ENCODE measurements at regions of chr2 and their contacts with region 1.

Region 1: DNA sequence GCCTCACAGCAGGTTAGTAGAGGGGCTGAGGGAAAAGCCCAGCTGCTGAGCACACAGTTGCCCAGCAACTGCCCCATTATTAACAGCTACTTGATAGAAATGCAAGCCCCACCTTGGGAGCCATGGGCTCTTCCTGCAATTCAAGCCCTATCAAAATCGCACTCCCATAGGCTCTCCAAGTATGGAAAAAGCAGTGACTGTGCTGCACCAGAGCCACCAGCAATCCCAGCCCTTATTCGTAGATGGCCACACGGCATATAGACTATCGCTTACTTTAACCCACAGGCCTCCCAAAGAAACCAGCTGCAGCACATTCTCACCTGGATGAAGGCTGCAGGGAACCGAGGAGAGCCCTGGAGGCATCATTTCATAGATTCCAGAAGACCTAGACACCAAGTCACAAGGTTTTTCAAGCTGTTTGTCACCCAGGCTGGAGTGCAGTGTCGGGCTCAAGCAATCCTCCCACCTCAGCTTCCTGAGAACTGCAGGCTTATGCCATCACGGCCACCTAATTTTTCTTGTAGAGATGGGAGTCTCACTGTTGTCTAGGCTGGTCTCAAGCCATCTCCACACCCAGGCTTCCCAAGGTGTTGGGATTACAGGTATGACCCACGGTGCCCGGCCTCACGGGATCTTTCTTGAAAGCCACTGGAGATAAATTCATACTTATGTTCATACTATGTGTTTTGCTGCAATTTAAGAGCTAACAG is 11.3 kb downstream of the NCL start:
- DNase-seq: peak; percentile 35 to 54
- H3K4me3 ChIP-seq: no peak overlapping the region
- H3K4me3 Mint-ChIP-seq: no peak overlapping the region
- H3K27ac Mint-ChIP-seq: peak overlapping the region; percentile 66
- H3K4me1 ChIP-seq: no peaks in the 10 kb centered on the region
- H3K4me1 Mint-ChIP-seq: peaks cover 6% of the 10 kb centered on the region
- H3K27me3 ChIP-seq: no peaks in the 10 kb centered on the region
- H3K27me3 Mint-ChIP-seq: no peaks in the 10 kb centered on the region
- CTCF ChIP-seq: no peak

Region 2: GRCh38 chr2:231198291-231199173 is 254.4 kb before region 1 on chr2 and contains the start of gene ARMC9:
- CTCF ChIA-PET with region 1: interaction called, 12 read pairs
- POLR2A ChIA-PET with region 1: no interaction called
- intact Hi-C with region 1: no loop called
- DNase-seq: peak; percentile 58 to 78
- H3K4me3 ChIP-seq: peak within 1 kb of the TSS; percentile 95
- H3K4me3 Mint-ChIP-seq: peak within 1 kb of the TSS; percentile 84
- H3K27ac Mint-ChIP-seq: peak within 1 kb of the TSS; percentile 57
- H3K4me1 ChIP-seq: 0 out of 2 replicates have a peak, but pooled peaks cover 4% of the 10 kb centered on the region
- H3K4me1 Mint-ChIP-seq: peaks cover 8% of the 10 kb centered on the region
- H3K27me3 ChIP-seq: no peaks in the 10 kb centered on the region
- H3K27me3 Mint-ChIP-seq: no peaks in the 10 kb centered on the region
- CTCF ChIP-seq: no peak
- total RNA-seq, gene ARMC9: 3.3 and 5.2 TPM in 2 replicates

Region 3: DNA sequence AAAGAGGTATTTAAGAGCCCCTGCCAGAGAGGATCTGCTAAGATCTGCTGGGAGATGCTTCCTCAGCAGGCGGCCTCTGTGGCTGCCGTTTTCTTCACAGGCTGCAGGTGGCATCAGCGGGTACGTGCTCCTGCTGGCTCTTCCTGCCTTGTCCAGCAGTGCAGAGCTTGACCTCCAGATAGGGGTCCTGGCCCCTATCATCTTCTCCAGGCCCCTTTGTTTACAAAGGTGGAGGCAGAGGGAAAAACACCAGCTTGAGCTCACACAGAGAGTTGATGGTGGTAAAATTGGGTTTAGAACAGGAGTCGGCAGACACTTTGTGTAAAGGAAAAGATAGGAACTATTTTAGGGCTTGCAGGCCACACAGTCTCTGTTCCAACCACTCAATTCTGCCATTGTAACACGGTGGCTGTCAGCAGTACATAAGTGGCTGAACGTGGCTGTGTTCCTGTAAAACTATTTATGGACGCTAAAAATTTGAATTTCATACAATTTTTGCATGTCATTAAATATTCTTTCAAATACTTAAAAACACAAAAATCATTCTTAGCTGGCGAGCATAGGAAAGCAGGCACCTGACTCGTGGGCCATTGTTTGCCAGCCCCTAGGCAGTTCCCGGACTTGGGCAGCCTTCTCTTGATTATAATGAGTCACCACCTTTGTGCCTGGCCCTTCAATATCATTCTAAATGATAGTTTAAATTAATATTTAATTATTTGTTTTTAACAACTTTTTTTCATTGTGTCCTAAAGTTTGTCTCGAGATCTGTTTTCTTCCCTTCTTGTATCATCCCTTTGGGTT is 155.6 kb before region 1 on chr2:
- CTCF ChIA-PET with region 1: interaction called, 7 read pairs
- POLR2A ChIA-PET with region 1: interaction called, 17 read pairs
- intact Hi-C with region 1: loop called (anchors 1 kb)
- DNase-seq: peak; percentile 56 to 59
- H3K4me3 ChIP-seq: no peak overlapping the region
- H3K4me3 Mint-ChIP-seq: no peak overlapping the region
- H3K27ac Mint-ChIP-seq: no peak overlapping the region
- H3K4me1 ChIP-seq: no peaks in the 10 kb centered on the region
- H3K4me1 Mint-ChIP-seq: peaks cover 6% of the 10 kb centered on the region
- H3K27me3 ChIP-seq: no peaks in the 10 kb centered on the region
- H3K27me3 Mint-ChIP-seq: no peaks in the 10 kb centered on the region
- CTCF ChIP-seq: peak; percentile 50 to 78

Region 4: DNA sequence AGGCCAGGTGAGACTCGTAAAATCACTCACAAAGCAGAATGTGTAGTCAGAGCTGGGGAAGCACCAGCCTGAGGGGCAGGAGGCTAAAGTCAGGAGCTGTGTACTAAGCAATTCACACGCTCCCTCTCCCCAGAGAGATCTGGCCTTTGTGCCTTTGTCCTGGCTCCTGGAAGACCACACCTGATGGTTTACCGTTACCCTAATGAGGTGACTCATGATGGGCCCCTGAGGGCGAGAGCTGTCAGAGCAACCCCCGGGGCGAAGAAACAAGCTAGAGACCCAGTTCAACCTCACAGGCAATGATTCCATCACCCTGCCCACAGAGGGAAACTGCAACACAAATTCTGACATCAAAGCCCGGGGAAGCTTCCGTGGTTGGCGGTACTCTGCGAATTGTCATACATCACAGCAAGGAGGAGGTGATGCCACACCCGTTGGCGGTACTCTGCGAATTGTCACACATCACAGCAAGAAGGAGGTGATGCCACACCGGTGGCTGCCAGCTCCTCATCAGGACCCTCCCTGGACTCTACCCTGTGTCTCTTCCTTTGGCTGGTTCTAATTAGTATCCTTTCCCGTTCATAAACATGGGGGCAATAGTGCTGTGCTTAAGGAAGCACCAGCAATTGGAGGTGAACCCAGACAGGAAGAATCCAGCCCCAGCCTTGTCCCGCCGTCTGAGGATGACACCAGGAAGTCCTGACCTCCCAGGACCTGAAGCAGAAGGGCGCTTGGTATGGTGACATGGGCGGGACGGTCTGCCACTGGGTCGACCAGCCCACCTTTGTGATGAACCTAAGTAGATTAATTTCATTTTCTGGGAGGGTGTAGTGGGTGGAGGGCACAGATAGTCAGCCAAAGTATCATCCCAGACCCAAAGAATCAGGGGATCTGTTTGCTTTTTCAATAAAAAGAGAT is 26.9 kb before region 1 on chr2:
- CTCF ChIA-PET with region 1: interaction called, 10 read pairs
- POLR2A ChIA-PET with region 1: no interaction called
- intact Hi-C with region 1: no loop called
- DNase-seq: peak; percentile 37 to 79
- H3K4me3 ChIP-seq: no peak overlapping the region
- H3K4me3 Mint-ChIP-seq: no peak overlapping the region
- H3K27ac Mint-ChIP-seq: no peak overlapping the region
- H3K4me1 ChIP-seq: 0 out of 2 replicates have a peak, but pooled peaks cover 5% of the 10 kb centered on the region
- H3K4me1 Mint-ChIP-seq: no peaks in the 10 kb centered on the region
- H3K27me3 ChIP-seq: no peaks in the 10 kb centered on the region
- H3K27me3 Mint-ChIP-seq: no peaks in the 10 kb centered on the region
- CTCF ChIP-seq: no peak